ENCODE measurements at regions of chr3 and their contacts with region 1.

Region 1: GRCh38 chr3:59857589-59858346 is 807.9 kb upstream of the CFAP20DC start:
- DNase-seq: peak; percentile 57
- H3K4me3 ChIP-seq: no peak overlapping the region
- H3K27ac ChIP-seq: no peak overlapping the region
- H3K4me1 ChIP-seq: no peaks in the 10 kb centered on the region
- H3K27me3 ChIP-seq: no peaks in the 10 kb centered on the region
- CTCF ChIP-seq: peak; percentile 76

Region 2: DNA sequence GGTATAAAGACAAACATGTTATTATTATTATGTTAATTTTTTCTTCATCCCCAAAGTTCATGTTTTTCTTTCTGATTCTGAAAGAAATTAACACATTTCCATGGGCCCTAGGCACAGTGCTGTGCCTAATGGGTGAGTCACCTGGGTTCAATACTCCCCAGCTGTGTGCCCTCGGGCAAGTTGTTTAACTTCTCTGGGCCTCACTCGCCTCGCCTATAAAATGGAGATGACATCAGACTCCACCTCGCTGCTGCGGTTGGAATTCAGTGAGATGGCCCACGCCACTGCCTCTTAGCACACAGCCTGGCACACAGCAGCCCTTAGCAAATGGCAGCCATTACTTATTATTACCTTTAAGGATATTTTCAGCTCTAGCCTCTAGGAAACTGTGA is 1669.6 kb before region 1 on chr3:
- CTCF ChIA-PET with region 1: no interaction called
- POLR2A ChIA-PET with region 1: no interaction called
- intact Hi-C with region 1: no loop called
- DNase-seq: peak; percentile 18
- H3K4me3 ChIP-seq: no peak overlapping the region
- H3K27ac ChIP-seq: no peak overlapping the region
- H3K4me1 ChIP-seq: peaks cover 6% of the 10 kb centered on the region
- H3K27me3 ChIP-seq: no peaks in the 10 kb centered on the region
- CTCF ChIP-seq: no peak

Region 3: DNA sequence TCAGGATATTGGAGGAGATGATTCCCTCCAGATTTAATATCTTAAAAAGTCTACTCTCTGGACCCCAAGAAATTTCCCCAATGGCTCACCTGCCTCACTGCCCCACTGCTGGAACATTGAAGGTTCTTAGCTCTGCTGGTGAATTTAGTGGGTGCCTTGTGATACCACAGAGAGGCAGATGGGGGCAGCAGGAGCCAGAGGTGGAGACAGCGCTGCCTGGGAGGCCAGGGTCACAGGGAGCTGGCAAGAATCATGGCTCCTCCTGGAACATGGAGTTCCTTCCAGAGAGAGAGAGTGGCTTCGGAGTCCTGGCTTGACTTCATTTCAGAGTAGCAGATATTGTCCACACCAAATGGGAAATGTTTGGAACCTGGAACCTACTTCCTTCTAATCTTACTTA is 544.4 kb before region 1 on chr3:
- CTCF ChIA-PET with region 1: interaction called, 7 read pairs
- POLR2A ChIA-PET with region 1: no interaction called
- intact Hi-C with region 1: loop called (anchors 10 kb)
- DNase-seq: peak; percentile 40
- H3K4me3 ChIP-seq: no peak overlapping the region
- H3K27ac ChIP-seq: no peak overlapping the region
- H3K4me1 ChIP-seq: no peaks in the 10 kb centered on the region
- H3K27me3 ChIP-seq: no peaks in the 10 kb centered on the region
- CTCF ChIP-seq: peak; percentile 53

Region 4: GRCh38 chr3:59575113-59576001 is 282.4 kb before region 1 on chr3:
- CTCF ChIA-PET with region 1: no interaction called
- POLR2A ChIA-PET with region 1: no interaction called
- intact Hi-C with region 1: loop called (anchors 2 kb)
- DNase-seq: peak; percentile 49
- H3K4me3 ChIP-seq: no peak overlapping the region
- H3K27ac ChIP-seq: no peak overlapping the region
- H3K4me1 ChIP-seq: no peaks in the 10 kb centered on the region
- H3K27me3 ChIP-seq: no peaks in the 10 kb centered on the region
- CTCF ChIP-seq: peak; percentile 73

Region 5: GRCh38 chr3:60046210-60046609 is 188.4 kb after region 1 on chr3:
- CTCF ChIA-PET with region 1: no interaction called
- POLR2A ChIA-PET with region 1: no interaction called
- intact Hi-C with region 1: no loop called
- DNase-seq: no peak
- H3K4me3 ChIP-seq: no peak overlapping the region
- H3K27ac ChIP-seq: no peak overlapping the region
- H3K4me1 ChIP-seq: no peaks in the 10 kb centered on the region
- H3K27me3 ChIP-seq: no peaks in the 10 kb centered on the region
- CTCF ChIP-seq: no peak

Measured in A673 (cell line).